H1 (cell line): ENCODE measurements at regions of chr18 and their contacts with region 1.

Region 1: DNA sequence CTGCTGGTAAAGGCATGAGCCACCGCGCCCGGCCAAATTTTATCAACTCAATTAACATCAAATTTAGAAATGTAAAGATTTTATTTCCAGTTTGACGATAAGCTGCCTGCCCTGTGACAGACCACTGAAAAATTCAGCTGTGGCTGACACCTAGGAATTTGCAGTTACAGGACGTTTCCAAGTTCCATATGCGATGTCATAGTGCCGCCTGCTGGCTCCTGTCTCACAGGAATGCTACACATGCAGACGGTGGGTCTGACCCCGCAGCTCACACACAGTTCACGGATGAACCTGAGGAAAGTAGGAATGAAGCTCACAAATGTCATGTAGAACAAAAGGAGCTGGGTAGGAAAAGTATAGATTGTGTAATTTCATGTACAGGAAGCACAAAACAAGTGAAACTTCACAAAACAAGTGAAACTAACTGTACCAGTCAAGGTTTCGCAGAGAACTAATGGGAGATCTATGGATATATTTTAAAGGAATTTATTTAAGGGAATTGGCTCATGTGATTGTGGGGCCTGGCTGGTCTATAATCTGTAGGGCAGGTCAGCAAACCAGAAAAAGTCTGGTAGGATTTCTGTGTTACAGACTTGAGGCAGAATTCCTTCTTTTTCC is 13.2 kb upstream of the SEH1L start:
- DNase-seq: peak in 1 of 2 experiments; percentile 82
- H3K4me3 ChIP-seq: no peak overlapping the region
- H3K27ac ChIP-seq: no peak overlapping the region
- H3K4me1 ChIP-seq: peaks cover 0 to 5% (median 3%) of the 10 kb centered on the region in 4 experiments; a peak in 1 of 7 replicates
- H3K27me3 ChIP-seq: no peaks in the 10 kb centered on the region
- CTCF ChIP-seq: peak; percentile 92 to 98 (median 93)
- EP300 ChIP-seq: no peak
- POLR2A ChIP-seq: no peak
- RAD21 ChIP-seq: peak; percentile 99

Region 2: DNA sequence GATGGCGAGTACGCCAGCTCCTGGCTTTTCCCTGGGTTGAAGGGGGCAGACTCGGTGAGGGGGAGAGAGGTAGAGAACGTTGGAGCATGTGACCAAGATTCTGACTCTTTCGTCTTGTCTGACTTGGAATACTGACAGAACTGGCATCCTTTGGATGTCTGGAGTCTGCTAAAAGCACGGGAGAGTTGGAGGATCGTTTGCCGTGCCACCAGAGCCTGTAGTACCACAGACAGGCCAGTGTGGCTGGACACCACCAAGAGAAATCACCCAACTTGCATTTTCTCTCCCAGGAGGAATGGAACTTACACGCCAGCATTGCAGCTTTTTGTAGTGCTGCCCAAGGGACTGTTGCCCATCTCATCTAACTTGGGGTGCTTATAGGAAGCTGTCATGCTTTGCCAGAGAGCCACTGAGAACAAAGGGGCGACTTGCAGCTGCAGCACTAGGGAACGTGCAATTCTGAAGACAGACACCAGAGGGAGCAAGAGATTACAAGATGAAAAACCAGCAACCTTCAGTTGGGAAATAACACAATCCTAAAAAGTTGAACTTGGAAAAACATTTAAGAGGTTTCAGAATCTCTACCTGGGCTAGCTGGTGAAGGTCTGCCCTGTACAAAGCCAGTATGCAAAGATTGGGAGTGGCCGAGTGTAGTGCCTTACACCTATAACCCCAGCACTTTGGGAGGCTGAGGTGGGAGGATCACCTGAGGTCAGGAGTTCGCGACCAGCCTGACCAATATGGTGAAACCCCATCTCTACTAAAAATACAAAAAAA is 207.6 kb before region 1 on chr18:
- CTCF ChIA-PET with region 1: interaction called, 125 read pairs
- POLR2A ChIA-PET with region 1: no interaction called
- DNase-seq: peak; percentile 44 to 85
- H3K4me3 ChIP-seq: 0 out of 8 replicates have a peak overlapping the region, but pooled peaks of 1 of the 4 experiments have one; percentile 0
- H3K27ac ChIP-seq: no peak overlapping the region
- H3K4me1 ChIP-seq: no peaks in the 10 kb centered on the region
- H3K27me3 ChIP-seq: no peaks in the 10 kb centered on the region
- CTCF ChIP-seq: peak; percentile 55 to 84 (median 80)
- EP300 ChIP-seq: no peak
- POLR2A ChIP-seq: no peak
- RAD21 ChIP-seq: peak; percentile 91 to 93

Region 3: GRCh38 chr18:12777500-12777944 is 157.0 kb before region 1 on chr18:
- CTCF ChIA-PET with region 1: interaction called, 10 read pairs
- POLR2A ChIA-PET with region 1: no interaction called
- DNase-seq: no peak
- H3K4me3 ChIP-seq: peak overlapping the region; percentile 31 to 63 (median 44)
- H3K27ac ChIP-seq: no peak overlapping the region
- H3K4me1 ChIP-seq: no peaks in the 10 kb centered on the region
- H3K27me3 ChIP-seq: peaks cover 0 to 28% (median 15%) of the 10 kb centered on the region in 4 experiments; a peak in 5 of 7 replicates
- CTCF ChIP-seq: no peak
- EP300 ChIP-seq: no peak
- POLR2A ChIP-seq: no peak
- RAD21 ChIP-seq: no peak

Region 4: GRCh38 chr18:12890506-12890905 is 44.1 kb before region 1 on chr18:
- CTCF ChIA-PET with region 1: interaction called, 34 read pairs
- POLR2A ChIA-PET with region 1: interaction called, 3 read pairs
- DNase-seq: no peak
- H3K4me3 ChIP-seq: no peak overlapping the region
- H3K27ac ChIP-seq: no peak overlapping the region
- H3K4me1 ChIP-seq: peaks cover 0 to 10% (median 2%) of the 10 kb centered on the region in 4 experiments; a peak in 3 of 7 replicates
- H3K27me3 ChIP-seq: no peaks in the 10 kb centered on the region
- CTCF ChIP-seq: peak in 2 of 3 experiments; percentile 2 to 45; a peak in 3 of 4 replicates
- EP300 ChIP-seq: no peak
- POLR2A ChIP-seq: no peak
- RAD21 ChIP-seq: peak in 1 of 2 experiments; percentile 30; a peak in 2 of 4 replicates

Region 5: DNA sequence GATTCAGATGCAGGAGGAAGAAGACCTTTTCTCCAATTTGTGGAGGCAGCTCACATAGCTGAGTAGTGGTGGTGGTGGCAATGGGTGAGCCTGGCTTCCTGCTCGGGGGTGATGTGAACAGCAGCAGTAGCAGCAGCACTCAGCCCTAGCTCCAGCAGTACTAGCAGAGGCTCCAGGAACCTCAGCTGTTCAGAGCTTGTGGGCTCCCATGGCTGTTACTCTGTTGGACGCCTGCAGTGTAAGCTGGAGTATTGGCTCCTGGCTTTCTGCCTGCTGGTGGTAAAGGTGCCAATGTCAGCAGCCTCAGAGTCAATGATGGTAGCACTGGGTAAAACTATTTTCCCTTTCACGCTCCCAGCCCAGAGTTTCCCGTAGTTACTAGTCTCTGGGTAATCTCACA is 10.1 kb after region 1 on chr18:
- CTCF ChIA-PET with region 1: interaction called, 16 read pairs
- POLR2A ChIA-PET with region 1: no interaction called
- DNase-seq: no peak
- H3K4me3 ChIP-seq: no peak overlapping the region
- H3K27ac ChIP-seq: no peak overlapping the region
- H3K4me1 ChIP-seq: peaks cover 0 to 3% (median 2%) of the 10 kb centered on the region in 4 experiments; a peak in 2 of 7 replicates
- H3K27me3 ChIP-seq: no peaks in the 10 kb centered on the region
- CTCF ChIP-seq: no peak
- EP300 ChIP-seq: no peak
- POLR2A ChIP-seq: no peak
- RAD21 ChIP-seq: no peak